CD4-positive, alpha-beta T cell (primary cell): ENCODE measurements at regions of chr1 and their contacts with region 1.

Region 1: GRCh38 chr1:15741183-15741850 is 982 bp upstream of the TMEM82 start:
- DNase-seq: peak; percentile 47 to 77 (median 60)
- ATAC-seq: peak; percentile 95
- H3K4me3 ChIP-seq: no peak overlapping the region
- H3K4me3 Mint-ChIP-seq: no peak overlapping the region
- H3K27ac ChIP-seq: no peak overlapping the region
- H3K27ac Mint-ChIP-seq: no peak overlapping the region
- H3K4me1 ChIP-seq: peaks cover 6% of the 10 kb centered on the region
- H3K4me1 Mint-ChIP-seq: peaks cover 6% of the 10 kb centered on the region
- H3K27me3 ChIP-seq: no peaks in the 10 kb centered on the region
- H3K27me3 Mint-ChIP-seq: no peaks in the 10 kb centered on the region
- CTCF ChIP-seq: peak; percentile 79

Region 2: GRCh38 chr1:15323351-15323988 is 417.8 kb before region 1 on chr1:
- CTCF ChIA-PET with region 1: no interaction called
- POLR2A ChIA-PET with region 1: no interaction called
- intact Hi-C with region 1: loop called in 1 of 2 experiments (anchors 5 kb)
- DNase-seq: peak; percentile 59 to 88 (median 66)
- ATAC-seq: peak; percentile 89
- H3K4me3 ChIP-seq: no peak overlapping the region
- H3K4me3 Mint-ChIP-seq: no peak overlapping the region
- H3K27ac ChIP-seq: no peak overlapping the region
- H3K27ac Mint-ChIP-seq: no peak overlapping the region
- H3K4me1 ChIP-seq: peaks cover 6% of the 10 kb centered on the region
- H3K4me1 Mint-ChIP-seq: no peaks in the 10 kb centered on the region
- H3K27me3 ChIP-seq: peaks cover 1 to 4% of the 10 kb centered on the region in 2 experiments
- H3K27me3 Mint-ChIP-seq: peaks cover 11% of the 10 kb centered on the region
- CTCF ChIP-seq: peak; percentile 96

Region 3: DNA sequence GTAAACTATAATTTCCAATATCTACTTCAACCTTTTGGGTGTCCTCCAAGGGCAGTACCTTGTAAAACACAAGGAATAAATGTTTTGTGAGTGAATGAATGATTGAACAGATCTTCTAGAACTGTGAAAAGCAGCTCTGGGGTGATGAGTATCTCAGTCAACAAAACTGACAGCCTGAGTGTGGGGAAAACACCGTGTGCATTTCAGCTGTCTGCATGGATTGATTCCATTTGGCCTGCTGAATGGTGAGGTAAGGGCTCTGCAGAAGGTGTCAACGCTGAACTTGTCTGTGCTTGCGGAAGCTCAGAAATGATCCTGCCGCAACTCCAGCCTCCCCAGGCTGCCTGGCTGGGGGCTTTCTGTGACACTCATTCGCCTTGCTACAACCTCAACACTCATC is 149.0 kb before region 1 on chr1:
- CTCF ChIA-PET with region 1: interaction called, 8 read pairs
- POLR2A ChIA-PET with region 1: no interaction called
- intact Hi-C with region 1: loop called in 1 of 2 experiments (anchors 1 kb)
- DNase-seq: no peak
- ATAC-seq: no peak
- H3K4me3 ChIP-seq: no peak overlapping the region
- H3K4me3 Mint-ChIP-seq: no peak overlapping the region
- H3K27ac ChIP-seq: no peak overlapping the region
- H3K27ac Mint-ChIP-seq: no peak overlapping the region
- H3K4me1 ChIP-seq: no peaks in the 10 kb centered on the region
- H3K4me1 Mint-ChIP-seq: peaks cover 2% of the 10 kb centered on the region
- H3K27me3 ChIP-seq: no peaks in the 10 kb centered on the region
- H3K27me3 Mint-ChIP-seq: no peaks in the 10 kb centered on the region
- CTCF ChIP-seq: no peak

Region 4: DNA sequence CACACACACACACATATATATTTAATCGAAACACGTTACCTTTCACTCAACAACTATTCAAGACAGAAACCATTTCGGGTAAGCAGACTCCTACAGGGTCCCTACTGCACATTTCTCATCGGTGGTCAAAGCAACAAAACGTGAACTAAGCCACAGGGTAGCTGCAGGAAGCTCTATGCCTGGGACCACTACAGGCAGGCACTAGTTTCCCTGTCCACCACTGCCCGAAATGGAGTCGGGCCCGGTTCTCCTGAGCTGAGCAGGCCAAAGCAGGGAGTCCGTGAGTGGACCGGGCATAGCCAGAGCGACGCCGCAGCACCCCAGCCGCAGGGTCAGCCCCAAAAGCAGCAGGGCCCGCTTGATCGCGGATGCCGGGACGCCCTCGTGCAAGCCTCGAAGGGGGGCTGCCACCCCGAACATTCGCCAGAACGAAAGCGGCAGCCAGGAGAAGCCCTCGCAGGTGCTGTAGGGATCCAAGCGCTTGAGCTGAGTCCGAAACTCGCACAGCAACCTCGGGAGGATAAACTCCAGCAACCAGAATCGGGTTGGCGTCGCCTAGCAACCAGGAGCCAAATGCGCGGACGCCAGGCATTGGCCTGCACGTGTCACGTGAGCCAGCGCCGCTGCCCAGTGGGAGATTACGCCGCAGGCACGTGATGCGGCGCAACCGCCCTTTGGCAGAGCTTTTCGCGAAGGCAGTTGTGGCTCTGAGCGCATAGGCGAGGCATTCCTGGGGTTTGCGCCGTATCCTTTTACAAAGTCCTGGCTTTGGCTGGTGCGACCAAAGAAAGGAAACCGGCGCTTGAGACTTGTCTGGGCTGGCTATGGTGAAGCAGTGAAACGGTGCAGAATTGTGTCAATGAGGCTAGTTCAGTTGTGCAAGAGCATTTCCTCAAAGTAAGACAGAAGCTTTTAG is 138.0 kb before region 1 on chr1:
- CTCF ChIA-PET with region 1: no interaction called
- POLR2A ChIA-PET with region 1: no interaction called
- intact Hi-C with region 1: no loop called
- DNase-seq: peak; percentile 85 to 98 (median 90)
- ATAC-seq: peak; percentile 98
- H3K4me3 ChIP-seq: peak overlapping the region; percentile 95
- H3K4me3 Mint-ChIP-seq: peak overlapping the region; percentile 65
- H3K27ac ChIP-seq: peak overlapping the region; percentile 47 to 49
- H3K27ac Mint-ChIP-seq: peak overlapping the region; percentile 80
- H3K4me1 ChIP-seq: peaks cover 15% of the 10 kb centered on the region
- H3K4me1 Mint-ChIP-seq: peaks cover 13% of the 10 kb centered on the region
- H3K27me3 ChIP-seq: no peaks in the 10 kb centered on the region
- H3K27me3 Mint-ChIP-seq: no peaks in the 10 kb centered on the region
- CTCF ChIP-seq: no peak

Region 5: GRCh38 chr1:15771836-15772515 is 30.7 kb after region 1 on chr1:
- CTCF ChIA-PET with region 1: no interaction called
- POLR2A ChIA-PET with region 1: no interaction called
- intact Hi-C with region 1: no loop called
- DNase-seq: no peak
- ATAC-seq: no peak
- H3K4me3 ChIP-seq: no peak overlapping the region
- H3K4me3 Mint-ChIP-seq: no peak overlapping the region
- H3K27ac ChIP-seq: no peak overlapping the region
- H3K27ac Mint-ChIP-seq: no peak overlapping the region
- H3K4me1 ChIP-seq: no peaks in the 10 kb centered on the region
- H3K4me1 Mint-ChIP-seq: no peaks in the 10 kb centered on the region
- H3K27me3 ChIP-seq: peaks cover 3 to 8% of the 10 kb centered on the region in 2 experiments
- H3K27me3 Mint-ChIP-seq: peaks cover 4% of the 10 kb centered on the region
- CTCF ChIP-seq: no peak